ACHN (cell line): ENCODE measurements at regions of chr13 and their contacts with region 1.

Region 1: GRCh38 chr13:79448413-79448812 is 32.5 kb upstream of the NDFIP2 start:
- DNase-seq: no peak

Region 2: DNA sequence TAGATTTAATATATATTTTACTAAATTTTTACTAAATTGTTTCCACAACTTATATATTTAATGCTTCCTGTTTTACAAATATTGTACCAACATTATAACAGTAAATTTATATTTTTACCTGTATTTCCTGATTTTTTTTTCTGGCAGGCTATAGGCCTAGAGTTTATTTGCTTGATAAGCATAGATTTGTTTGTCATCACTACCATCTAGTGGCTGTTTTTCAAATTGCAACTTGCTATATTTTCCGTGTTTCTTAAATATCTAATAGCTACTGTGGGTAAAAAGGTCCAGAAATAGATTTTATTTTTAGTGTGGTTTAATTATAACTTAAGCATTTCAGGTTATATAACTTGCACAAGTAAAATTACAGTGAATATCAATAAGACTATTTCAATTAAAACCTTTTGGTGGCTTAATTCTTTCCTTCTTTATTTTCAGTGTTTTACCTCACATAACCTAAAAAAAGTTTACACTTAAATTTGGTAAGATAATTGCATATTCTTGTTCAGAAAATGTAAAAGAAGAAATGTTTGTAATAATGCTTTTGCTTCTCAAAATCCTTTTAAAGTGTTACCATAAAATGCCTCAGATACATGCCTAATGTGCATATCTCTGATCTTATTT is 93.1 kb after region 1 on chr13:
- in situ Hi-C with region 1: loop called (anchors 25 kb)
- DNase-seq: peak; percentile 69